Spleen (tissue), 13 donors: ENCODE measurements at regions of chr16 and their contacts with region 1.

Region 1: DNA sequence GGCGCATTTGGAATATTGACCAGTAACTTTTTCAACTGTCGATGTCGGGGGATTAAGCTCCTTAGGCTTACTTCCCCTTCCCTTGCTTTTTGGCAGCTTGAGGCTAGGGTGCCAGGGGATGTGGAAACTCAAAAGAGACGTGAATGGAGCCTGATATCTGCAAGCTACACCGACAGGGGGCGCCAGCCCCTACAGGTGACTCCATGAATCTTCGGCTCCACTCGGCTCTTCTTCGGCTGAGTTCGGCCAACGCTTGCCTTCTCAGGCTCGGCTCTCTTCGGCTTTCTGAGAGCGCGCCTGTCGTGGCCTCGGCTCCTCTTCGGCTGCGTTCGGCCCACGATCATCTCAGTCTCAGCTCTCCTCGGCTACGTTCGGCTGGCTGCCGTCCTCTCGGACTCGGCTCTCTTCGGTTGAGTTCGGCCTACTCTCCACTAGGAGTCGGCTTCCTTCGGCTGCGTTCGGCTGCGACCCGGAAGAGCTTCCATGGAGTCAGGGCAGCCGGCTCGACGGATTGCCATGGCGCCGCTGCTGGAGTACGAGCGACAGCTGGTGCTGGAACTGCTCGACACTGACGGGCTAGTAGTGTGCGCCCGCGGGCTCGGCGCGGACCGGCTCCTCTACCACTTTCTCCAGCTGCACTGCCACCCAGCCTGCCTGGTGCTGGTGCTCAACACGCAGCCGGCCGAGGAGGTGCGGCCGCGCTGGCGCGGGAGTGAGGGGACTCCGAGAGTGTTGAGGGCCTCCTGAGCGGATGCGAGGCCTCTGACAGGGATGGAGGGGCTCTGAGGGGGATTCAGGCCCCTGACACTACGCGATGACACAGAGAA is at the start of gene ERCC4:
- DNase-seq: peak; percentile 99
- H3K4me3 ChIP-seq: peak within 1 kb of the TSS; percentile 57 to 98 (median 84)
- H3K27ac ChIP-seq: peak within 1 kb of the TSS; percentile 39 to 89 (median 80)
- H3K4me1 ChIP-seq: peaks cover 0 to 35% (median 24%) of the 10 kb centered on the region in 6 donors
- H3K27me3 ChIP-seq: no peaks in the 10 kb centered on the region
- CTCF ChIP-seq: peak; percentile 81 to 97 (median 95)
- POLR2A ChIP-seq: peak in 1 of 3 donors; percentile 28
- total RNA-seq, gene ERCC4: 5.9 to 15.2 (median 12.5) TPM

Region 2: DNA sequence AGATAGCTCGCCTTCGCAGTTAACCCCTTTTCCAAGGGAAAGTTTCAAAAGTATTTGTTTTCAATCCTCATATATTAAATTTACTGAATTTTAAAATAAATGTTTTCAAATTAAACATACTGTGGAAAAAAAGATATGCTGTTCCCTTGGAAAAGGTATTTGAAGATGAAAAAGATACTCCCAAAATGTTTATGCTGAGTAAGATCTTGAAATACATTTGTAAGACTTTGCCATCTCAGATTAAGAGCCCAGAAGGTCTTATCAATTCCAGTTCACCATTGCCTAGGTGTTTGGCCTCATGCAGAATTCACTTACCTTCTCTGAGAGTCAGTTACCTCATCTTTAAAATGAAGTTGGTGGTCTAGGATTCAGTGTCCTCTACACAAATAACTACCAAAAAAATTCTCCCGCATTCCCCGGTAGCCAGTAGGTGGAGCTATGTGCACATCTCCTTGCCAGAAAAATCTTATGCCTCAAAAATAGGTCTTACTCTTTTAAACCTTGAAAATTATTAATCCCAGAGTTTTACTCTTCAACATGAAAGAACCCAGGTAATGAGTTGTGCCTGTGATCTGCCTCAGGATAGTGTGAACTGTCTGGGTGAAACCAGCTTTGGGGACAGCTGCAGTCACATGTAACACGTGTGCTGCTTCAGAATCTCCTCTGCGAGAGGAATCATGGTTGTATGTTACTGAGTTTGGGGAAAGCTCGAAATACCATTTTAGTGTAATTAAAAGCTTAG is 329.6 kb after region 1 on chr16:
- intact Hi-C with region 1: loop called (anchors 10 kb)
- DNase-seq: no peak
- H3K4me3 ChIP-seq: no peak overlapping the region
- H3K27ac ChIP-seq: no peak overlapping the region
- H3K4me1 ChIP-seq: no peaks in the 10 kb centered on the region
- H3K27me3 ChIP-seq: no peaks in the 10 kb centered on the region
- CTCF ChIP-seq: peak in 10 of 11 experiments; percentile 29 to 77 (median 62)
- POLR2A ChIP-seq: no peak

Region 3: GRCh38 chr16:14285513-14286385 is 365.9 kb after region 1 on chr16:
- intact Hi-C with region 1: loop called (anchors 10 kb)
- DNase-seq: peak; percentile 97
- H3K4me3 ChIP-seq: peak overlapping the region; percentile 87 to 99 (median 94)
- H3K27ac ChIP-seq: peak overlapping the region; percentile 70 to 89 (median 84)
- H3K4me1 ChIP-seq: peaks cover 6 to 34% (median 23%) of the 10 kb centered on the region in 6 donors
- H3K27me3 ChIP-seq: no peaks in the 10 kb centered on the region
- CTCF ChIP-seq: no peak
- POLR2A ChIP-seq: no peak

Region 4: DNA sequence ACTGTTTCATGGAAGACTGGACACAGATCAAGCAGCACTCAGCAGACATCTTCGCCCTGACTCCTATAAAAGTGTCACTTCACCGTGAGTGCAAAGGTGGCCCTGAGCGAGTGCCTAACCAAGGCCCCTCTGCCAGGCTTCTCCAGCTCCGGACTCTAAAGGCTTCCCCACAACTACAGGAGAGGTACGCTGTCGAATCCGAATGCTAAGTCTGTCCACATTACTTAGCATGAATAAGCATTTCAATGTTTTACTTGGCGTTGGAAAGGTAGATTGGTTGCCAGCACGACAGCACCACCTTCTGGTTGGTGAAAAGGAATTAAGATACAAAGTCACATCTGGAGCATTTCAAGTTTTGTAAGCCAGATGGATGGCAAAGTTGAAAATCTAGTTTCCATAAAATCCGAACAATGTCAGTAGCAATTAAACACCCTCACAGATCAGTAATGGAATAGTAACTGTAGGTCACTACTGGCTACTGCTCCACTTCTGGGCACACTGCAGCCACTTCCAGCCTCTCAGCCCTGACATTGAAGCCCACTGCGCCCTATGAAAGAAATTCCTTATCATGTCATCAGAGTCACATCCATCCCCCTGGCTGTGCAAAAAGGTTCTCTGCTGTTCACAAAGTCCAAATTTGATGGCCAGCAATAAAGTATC is 609.2 kb after region 1 on chr16:
- intact Hi-C with region 1: loop called (anchors 10 kb)
- DNase-seq: no peak
- H3K4me3 ChIP-seq: no peak overlapping the region
- H3K27ac ChIP-seq: no peak overlapping the region
- H3K4me1 ChIP-seq: peaks cover 0 to 9% (median 2%) of the 10 kb centered on the region in 6 donors
- H3K27me3 ChIP-seq: no peaks in the 10 kb centered on the region
- CTCF ChIP-seq: peak in 10 of 11 experiments; percentile 30 to 84 (median 65)
- POLR2A ChIP-seq: no peak